Activated CD4-positive, alpha-beta memory T cell treated with anti-CD3 and anti-CD28 coated beads, Interleukin-2, amount 10 ng/mL, durations not matched to agents 7 days and 5 days (primary cell): ENCODE measurements at regions of chr20 and their contacts with region 1.

Region 1: GRCh38 chr20:47272893-47273590 is 83.5 kb downstream of the ZMYND8 start:
- DNase-seq: peak; percentile 45
- H3K4me3 Mint-ChIP-seq: no peak overlapping the region
- H3K27ac Mint-ChIP-seq: peak overlapping the region; percentile 33
- H3K4me1 Mint-ChIP-seq: peaks cover 38% of the 10 kb centered on the region
- H3K27me3 Mint-ChIP-seq: no peaks in the 10 kb centered on the region

Region 2: DNA sequence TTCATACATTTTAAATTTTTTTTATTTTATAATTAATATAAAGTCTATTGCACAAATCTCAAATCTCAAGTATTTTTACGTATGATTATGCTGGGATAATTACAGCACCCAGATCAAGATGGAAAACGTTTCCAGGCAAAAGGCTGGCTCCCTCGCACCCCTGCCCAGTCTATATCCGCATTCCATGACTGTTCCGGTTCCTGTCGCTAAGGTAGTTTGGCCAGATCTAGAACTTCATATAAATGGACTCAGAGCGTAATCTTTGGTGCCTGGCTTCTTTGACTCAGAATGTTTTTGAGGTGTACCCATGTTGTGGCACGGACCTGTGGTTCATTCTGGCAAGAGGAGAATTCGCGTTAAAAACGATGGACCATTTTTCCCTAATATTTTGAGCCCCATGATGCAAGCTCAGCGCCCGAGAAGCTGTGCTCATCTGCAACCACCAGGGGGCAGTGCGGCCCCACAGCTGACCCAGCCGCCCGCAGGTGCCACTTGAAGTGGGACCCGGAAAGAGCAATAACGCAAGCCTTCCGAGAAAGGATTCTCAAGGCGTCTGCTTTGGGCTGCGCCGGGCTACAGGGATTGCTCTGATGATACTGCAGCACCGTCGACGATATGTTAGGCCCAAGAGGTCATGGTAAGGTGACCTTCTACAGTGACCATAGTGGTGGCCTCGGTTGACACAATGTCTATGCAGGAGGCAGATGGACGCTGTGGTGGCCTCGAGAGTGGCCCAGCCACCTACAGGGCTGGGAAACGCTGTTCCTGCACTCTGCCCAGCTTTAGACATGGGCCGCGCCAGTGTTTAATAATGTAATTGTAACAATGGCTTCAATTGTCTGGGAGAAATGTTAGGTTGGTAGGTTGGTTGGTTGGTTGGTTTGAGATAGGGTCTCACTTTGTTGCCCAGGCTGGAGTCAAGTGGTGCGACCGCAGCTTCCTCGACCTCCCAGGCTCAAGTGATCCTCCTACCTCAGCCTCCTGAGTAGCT is 76.7 kb before region 1 on chr20:
- CTCF ChIA-PET with region 1: interaction called, 11 read pairs
- POLR2A ChIA-PET with region 1: no interaction called
- DNase-seq: peak; percentile 84
- H3K4me3 Mint-ChIP-seq: no peak overlapping the region
- H3K27ac Mint-ChIP-seq: no peak overlapping the region
- H3K4me1 Mint-ChIP-seq: peaks cover 12% of the 10 kb centered on the region
- H3K27me3 Mint-ChIP-seq: peaks cover 5% of the 10 kb centered on the region

Region 3: GRCh38 chr20:47258745-47259695 is 14.0 kb before region 1 on chr20:
- CTCF ChIA-PET with region 1: interaction called, 24 read pairs
- POLR2A ChIA-PET with region 1: interaction called, 5 read pairs
- DNase-seq: no peak
- H3K4me3 Mint-ChIP-seq: no peak overlapping the region
- H3K27ac Mint-ChIP-seq: no peak overlapping the region
- H3K4me1 Mint-ChIP-seq: peaks cover 8% of the 10 kb centered on the region
- H3K27me3 Mint-ChIP-seq: no peaks in the 10 kb centered on the region

Region 4: DNA sequence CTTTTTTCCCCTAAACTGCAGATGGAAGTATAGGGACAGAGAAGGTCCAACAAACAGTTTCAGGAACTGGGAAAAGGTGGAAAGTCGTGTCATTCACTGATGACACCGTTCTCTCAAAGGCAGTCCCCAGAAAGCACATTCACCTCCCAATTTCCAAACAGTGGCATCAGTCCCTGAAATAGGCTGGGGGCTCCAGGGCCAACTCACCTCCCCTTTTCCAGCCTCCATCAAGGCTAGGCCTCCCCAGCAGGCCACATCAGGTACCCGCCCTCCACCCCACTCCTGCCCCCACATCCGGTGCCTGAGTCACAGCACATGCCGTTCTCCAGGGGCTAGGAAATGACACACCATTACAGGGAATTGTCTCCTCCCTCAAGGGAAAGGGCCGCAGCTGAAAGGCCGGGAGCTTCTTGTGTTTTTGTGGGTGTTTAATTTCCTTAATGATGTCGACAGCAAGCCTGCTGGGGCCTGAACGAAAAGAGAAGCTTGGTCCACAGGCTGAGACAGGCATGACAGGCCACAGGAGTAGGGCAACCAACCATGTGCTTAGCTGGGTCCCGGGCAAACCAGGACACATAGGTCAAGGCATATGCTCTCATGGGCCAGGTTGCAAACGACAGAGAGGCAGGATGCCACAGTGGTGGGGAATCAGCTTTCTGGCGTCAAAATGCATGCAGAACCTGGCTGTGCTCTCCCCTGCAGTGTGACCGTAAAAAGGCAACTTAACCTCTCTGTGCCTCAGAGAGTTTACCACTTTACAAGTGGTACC is 44.3 kb after region 1 on chr20:
- CTCF ChIA-PET with region 1: interaction called, 5 read pairs
- POLR2A ChIA-PET with region 1: interaction called, 10 read pairs
- DNase-seq: peak; percentile 68
- H3K4me3 Mint-ChIP-seq: peak overlapping the region; percentile 48
- H3K27ac Mint-ChIP-seq: peak overlapping the region; percentile 56
- H3K4me1 Mint-ChIP-seq: peaks cover 63% of the 10 kb centered on the region
- H3K27me3 Mint-ChIP-seq: no peaks in the 10 kb centered on the region

Region 5: DNA sequence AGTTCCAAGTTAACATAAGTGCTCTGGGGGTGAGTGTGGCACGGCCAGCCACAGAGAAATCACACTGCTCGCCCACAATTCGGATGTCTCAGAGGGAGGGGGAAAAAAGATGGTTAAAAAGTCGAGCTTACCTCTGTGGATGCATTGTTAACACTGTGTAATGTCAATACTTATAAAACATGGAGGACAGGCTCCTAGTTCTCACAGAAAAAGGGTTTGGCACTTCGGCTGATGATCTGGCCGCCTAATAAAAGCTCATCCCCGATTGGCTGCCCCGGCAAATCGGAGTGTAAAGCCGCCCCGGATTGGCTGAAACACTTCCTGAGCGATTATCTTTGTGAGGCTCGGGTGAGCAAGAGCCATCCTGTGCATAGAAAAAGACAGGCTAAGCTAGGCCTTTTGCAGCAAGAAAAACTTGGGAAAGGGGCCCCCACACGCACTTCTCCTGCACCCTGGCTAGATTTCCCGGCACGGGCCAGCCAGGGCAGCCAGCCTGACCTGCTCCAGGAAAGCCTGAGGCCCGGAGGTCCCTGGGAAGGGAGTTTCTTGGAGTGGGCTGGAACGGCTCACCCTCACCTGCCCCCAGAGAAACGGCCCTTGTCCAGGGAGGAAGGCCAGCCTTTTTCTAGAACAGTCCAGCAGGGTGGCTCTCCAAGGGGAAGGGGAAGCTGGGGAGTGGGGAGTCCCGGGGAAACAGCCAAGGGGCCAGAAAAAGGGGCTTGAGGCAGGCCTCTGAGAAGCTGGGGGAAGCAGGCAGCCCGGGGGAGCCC is 83.7 kb after region 1 on chr20 and contains the start of gene ZMYND8:
- CTCF ChIA-PET with region 1: interaction called, 34 read pairs
- POLR2A ChIA-PET with region 1: interaction called, 44 read pairs
- DNase-seq: peak; percentile 99
- H3K4me3 Mint-ChIP-seq: peak within 1 kb of the TSS; percentile 81
- H3K27ac Mint-ChIP-seq: peak within 1 kb of the TSS; percentile 94
- H3K4me1 Mint-ChIP-seq: peaks cover 24% of the 10 kb centered on the region
- H3K27me3 Mint-ChIP-seq: no peaks in the 10 kb centered on the region
- total RNA-seq, gene ZMYND8: 37.8 to 44.2 TPM

Region 6: GRCh38 chr20:47392015-47392720 is 119.1 kb after region 1 on chr20:
- CTCF ChIA-PET with region 1: interaction called, 441 read pairs
- POLR2A ChIA-PET with region 1: no interaction called
- DNase-seq: no peak
- H3K4me3 Mint-ChIP-seq: no peak overlapping the region
- H3K27ac Mint-ChIP-seq: no peak overlapping the region
- H3K4me1 Mint-ChIP-seq: peaks cover 21% of the 10 kb centered on the region
- H3K27me3 Mint-ChIP-seq: no peaks in the 10 kb centered on the region

Region 7: GRCh38 chr20:47406849-47407666 is 134.0 kb after region 1 on chr20:
- CTCF ChIA-PET with region 1: no interaction called
- POLR2A ChIA-PET with region 1: no interaction called
- DNase-seq: no peak
- H3K4me3 Mint-ChIP-seq: no peak overlapping the region
- H3K27ac Mint-ChIP-seq: no peak overlapping the region
- H3K4me1 Mint-ChIP-seq: peaks cover 6% of the 10 kb centered on the region
- H3K27me3 Mint-ChIP-seq: no peaks in the 10 kb centered on the region

Region 8: GRCh38 chr20:47620808-47621805 is 348.1 kb after region 1 on chr20:
- CTCF ChIA-PET with region 1: interaction called, 39 read pairs
- POLR2A ChIA-PET with region 1: interaction called, 3 read pairs
- DNase-seq: no peak
- H3K4me3 Mint-ChIP-seq: no peak overlapping the region
- H3K27ac Mint-ChIP-seq: no peak overlapping the region
- H3K4me1 Mint-ChIP-seq: peaks cover 40% of the 10 kb centered on the region
- H3K27me3 Mint-ChIP-seq: no peaks in the 10 kb centered on the region